ENCODE measurements at regions of chr6 and their contacts with region 1.

Region 1: GRCh38 chr6:6556738-6557505 is 31.6 kb upstream of the LY86 start:
- DNase-seq: peak; percentile 68
- ATAC-seq: peak; percentile 55
- H3K4me3 Mint-ChIP-seq: no peak overlapping the region
- H3K27ac Mint-ChIP-seq: no peak overlapping the region
- H3K4me1 Mint-ChIP-seq: peaks cover 38% of the 10 kb centered on the region
- H3K27me3 Mint-ChIP-seq: peaks cover 2% of the 10 kb centered on the region

Region 2: DNA sequence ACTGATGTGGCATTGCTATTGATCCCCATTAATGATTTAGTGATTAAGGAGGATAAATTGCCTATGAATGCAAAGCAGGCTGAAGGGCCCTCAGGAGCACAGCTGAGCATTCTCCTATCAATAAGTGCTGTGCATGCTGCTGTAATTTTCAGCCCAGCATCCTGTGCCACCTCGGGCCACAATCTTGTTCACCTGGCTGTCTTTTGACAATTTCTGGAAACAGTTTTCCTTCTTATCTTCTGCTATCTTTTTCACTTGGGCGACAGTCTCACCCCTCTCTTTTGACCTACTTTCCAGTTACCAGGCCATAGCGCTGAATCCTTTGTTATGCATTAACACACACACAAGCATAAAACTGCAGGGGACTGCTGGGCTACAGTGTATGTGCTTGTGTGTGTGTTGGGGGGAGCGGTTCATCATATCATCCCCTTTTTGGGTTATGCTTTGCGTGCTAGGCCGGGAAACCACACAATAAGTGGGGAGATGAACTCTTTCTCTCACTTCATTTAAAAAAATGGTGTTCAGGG is 296.7 kb before region 1 on chr6:
- CTCF ChIA-PET with region 1: no interaction called
- POLR2A ChIA-PET with region 1: no interaction called
- intact Hi-C with region 1: no loop called
- DNase-seq: no peak
- ATAC-seq: no peak
- H3K4me3 Mint-ChIP-seq: no peak overlapping the region
- H3K27ac Mint-ChIP-seq: no peak overlapping the region
- H3K4me1 Mint-ChIP-seq: no peaks in the 10 kb centered on the region
- H3K27me3 Mint-ChIP-seq: peaks cover 9% of the 10 kb centered on the region

Region 3: GRCh38 chr6:6466967-6467761 is 89.8 kb before region 1 on chr6:
- CTCF ChIA-PET with region 1: no interaction called
- POLR2A ChIA-PET with region 1: no interaction called
- intact Hi-C with region 1: no loop called
- DNase-seq: peak; percentile 9
- ATAC-seq: no peak
- H3K4me3 Mint-ChIP-seq: no peak overlapping the region
- H3K27ac Mint-ChIP-seq: no peak overlapping the region
- H3K4me1 Mint-ChIP-seq: no peaks in the 10 kb centered on the region
- H3K27me3 Mint-ChIP-seq: peaks cover 14% of the 10 kb centered on the region

Region 4: GRCh38 chr6:6659600-6660327 is 102.8 kb after region 1 on chr6:
- CTCF ChIA-PET with region 1: interaction called, 3 read pairs
- POLR2A ChIA-PET with region 1: no interaction called
- intact Hi-C with region 1: loop called in 1 of 2 experiments (anchors 5 kb)
- DNase-seq: no peak
- ATAC-seq: no peak
- H3K4me3 Mint-ChIP-seq: no peak overlapping the region
- H3K27ac Mint-ChIP-seq: peak overlapping the region; percentile 95
- H3K4me1 Mint-ChIP-seq: peaks cover 72% of the 10 kb centered on the region
- H3K27me3 Mint-ChIP-seq: no peaks in the 10 kb centered on the region